ENCODE measurements at regions of chr12 and their contacts with region 1.

Region 1: DNA sequence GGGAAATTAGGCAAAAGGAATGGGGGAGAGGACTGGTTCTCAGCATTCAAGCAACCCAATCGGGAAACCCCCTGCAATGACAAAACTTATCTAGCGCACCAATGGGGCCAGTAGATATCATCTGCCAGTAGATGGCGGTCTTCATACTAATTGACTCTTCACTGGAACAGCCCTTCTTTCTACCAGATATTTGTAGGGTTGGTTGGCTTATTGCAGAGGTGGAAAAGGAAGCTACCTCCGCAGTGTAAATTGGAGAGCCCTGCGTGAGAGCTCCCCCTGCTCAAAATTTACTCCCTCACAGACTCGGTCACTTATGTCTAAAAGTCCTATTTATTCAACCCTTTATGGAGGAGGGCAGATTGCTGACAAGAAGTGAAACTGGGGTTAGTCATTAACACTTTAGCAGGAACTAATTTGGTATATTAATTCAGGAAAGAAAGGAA is 166.1 kb upstream of the CCND2 start:
- DNase-seq: peak; percentile 79
- H3K4me3 ChIP-seq: no peak overlapping the region
- H3K27ac ChIP-seq: no peak overlapping the region
- H3K4me1 ChIP-seq: peaks cover 20% of the 10 kb centered on the region
- H3K27me3 ChIP-seq: no peaks in the 10 kb centered on the region
- CTCF ChIP-seq: peak; percentile 78 to 84

Region 2: GRCh38 chr12:3892631-3893030 is 214.8 kb before region 1 on chr12:
- CTCF ChIA-PET with region 1: no interaction called
- dilution Hi-C with region 1: loop called (anchors 5 kb)
- in situ Hi-C with region 1: no loop called
- intact Hi-C with region 1: no loop called
- DNase-seq: no peak
- H3K4me3 ChIP-seq: no peak overlapping the region
- H3K27ac ChIP-seq: no peak overlapping the region
- H3K4me1 ChIP-seq: no peaks in the 10 kb centered on the region
- H3K27me3 ChIP-seq: peaks cover 5% of the 10 kb centered on the region
- CTCF ChIP-seq: no peak

Region 3: GRCh38 chr12:3998968-3999826 is 108.3 kb before region 1 on chr12:
- CTCF ChIA-PET with region 1: no interaction called
- dilution Hi-C with region 1: no loop called
- in situ Hi-C with region 1: no loop called
- intact Hi-C with region 1: loop called (anchors 10 kb)
- DNase-seq: peak; percentile 96
- H3K4me3 ChIP-seq: no peak overlapping the region
- H3K27ac ChIP-seq: peak overlapping the region; percentile 90
- H3K4me1 ChIP-seq: peaks cover 34% of the 10 kb centered on the region
- H3K27me3 ChIP-seq: no peaks in the 10 kb centered on the region
- CTCF ChIP-seq: no peak

Region 4: GRCh38 chr12:4030929-4031702 is 76.3 kb before region 1 on chr12:
- CTCF ChIA-PET with region 1: interaction called, 5 read pairs
- dilution Hi-C with region 1: loop called (anchors 5 kb)
- in situ Hi-C with region 1: no loop called
- intact Hi-C with region 1: no loop called
- DNase-seq: peak; percentile 99
- H3K4me3 ChIP-seq: peak overlapping the region in 1 of 3 experiments; percentile 25
- H3K27ac ChIP-seq: peak overlapping the region; percentile 91
- H3K4me1 ChIP-seq: peaks cover 42% of the 10 kb centered on the region
- H3K27me3 ChIP-seq: no peaks in the 10 kb centered on the region
- CTCF ChIP-seq: no peak

Region 5: GRCh38 chr12:4143896-4144295 is 36.4 kb after region 1 on chr12:
- CTCF ChIA-PET with region 1: interaction called, 21 read pairs
- dilution Hi-C with region 1: no loop called
- in situ Hi-C with region 1: no loop called
- intact Hi-C with region 1: no loop called
- DNase-seq: peak; percentile 43
- H3K4me3 ChIP-seq: no peak overlapping the region
- H3K27ac ChIP-seq: no peak overlapping the region
- H3K4me1 ChIP-seq: peaks cover 18% of the 10 kb centered on the region
- H3K27me3 ChIP-seq: no peaks in the 10 kb centered on the region
- CTCF ChIP-seq: peak in 1 of 2 donors; percentile 18

Region 6: GRCh38 chr12:4164559-4165558 is 57.4 kb after region 1 on chr12:
- CTCF ChIA-PET with region 1: no interaction called
- dilution Hi-C with region 1: loop called (anchors 5 kb)
- in situ Hi-C with region 1: no loop called
- intact Hi-C with region 1: no loop called
- DNase-seq: peak; percentile 57
- H3K4me3 ChIP-seq: peak overlapping the region; percentile 16 to 47 (median 29)
- H3K27ac ChIP-seq: peak overlapping the region; percentile 6
- H3K4me1 ChIP-seq: peaks cover 15% of the 10 kb centered on the region
- H3K27me3 ChIP-seq: no peaks in the 10 kb centered on the region
- CTCF ChIP-seq: no peak